ENCODE measurements at regions of chr17 and their contacts with region 1.

Region 1: DNA sequence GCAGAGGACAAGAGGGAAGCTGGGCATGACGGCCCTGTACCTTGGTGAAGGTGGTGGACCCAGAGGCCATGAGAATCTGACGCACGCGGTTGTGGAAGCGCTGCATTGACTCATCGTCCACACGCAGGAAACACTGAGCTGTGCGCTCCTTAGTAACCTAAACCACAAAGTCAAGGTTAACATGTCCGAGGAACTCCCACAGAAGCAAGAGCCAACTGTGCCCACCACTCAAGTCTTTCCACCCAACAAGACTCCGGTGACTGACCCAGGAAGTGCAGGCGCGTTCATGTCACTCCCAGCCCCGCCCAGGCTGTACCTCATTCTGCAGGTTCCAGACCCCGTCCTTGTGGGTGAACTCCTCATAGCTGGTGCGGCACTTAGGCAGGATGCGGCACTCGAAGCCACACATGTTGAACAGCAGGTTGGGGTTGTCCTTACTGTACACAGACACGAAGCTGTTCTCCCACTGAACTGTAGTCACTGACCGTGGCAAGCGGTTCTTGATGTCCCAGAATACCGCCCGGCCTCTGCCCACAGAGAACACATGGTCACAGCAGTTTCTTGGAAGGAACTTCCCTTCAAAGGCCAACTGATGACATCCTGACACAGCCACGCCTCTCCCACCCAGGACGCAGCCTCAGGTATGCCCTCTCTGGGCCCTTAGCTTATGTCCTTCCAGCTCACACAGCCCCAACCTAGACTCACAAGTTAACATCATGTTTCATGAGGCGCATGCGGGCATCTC is 11.5 kb downstream of the PRPF8 start:
- DNase-seq: peak in 1 of 9 donors; percentile 7
- ATAC-seq: peak; percentile 26
- H3K4me3 ChIP-seq: no peak overlapping the region
- H3K4me3 Mint-ChIP-seq: no peak overlapping the region
- H3K27ac ChIP-seq: no peak overlapping the region
- H3K27ac Mint-ChIP-seq: peak overlapping the region in 5 of 9 donors; percentile 6 to 60 (median 43)
- H3K4me1 ChIP-seq: no peaks in the 10 kb centered on the region
- H3K4me1 Mint-ChIP-seq: peaks cover 19 to 45% (median 34%) of the 10 kb centered on the region in 7 donors
- H3K27me3 ChIP-seq: no peaks in the 10 kb centered on the region
- H3K27me3 Mint-ChIP-seq: no peaks in the 10 kb centered on the region

Region 2: GRCh38 chr17:1783834-1784611 is 110.8 kb after region 1 on chr17:
- CTCF ChIA-PET with region 1: interaction called, 3 read pairs
- POLR2A ChIA-PET with region 1: interaction called, 3 read pairs
- intact Hi-C with region 1: loop called (anchors 1 kb)
- DNase-seq: peak in 3 of 9 donors; percentile 27 to 30 (median 28)
- ATAC-seq: peak; percentile 85
- H3K4me3 ChIP-seq: no peak overlapping the region
- H3K4me3 Mint-ChIP-seq: peak overlapping the region in 1 of 10 donors; percentile 59
- H3K27ac ChIP-seq: peak overlapping the region; percentile 14
- H3K27ac Mint-ChIP-seq: peak overlapping the region in 7 of 9 donors; percentile 28 to 82 (median 63)
- H3K4me1 ChIP-seq: no peaks in the 10 kb centered on the region
- H3K4me1 Mint-ChIP-seq: peaks cover 0 to 18% (median 14%) of the 10 kb centered on the region in 7 donors
- H3K27me3 ChIP-seq: no peaks in the 10 kb centered on the region
- H3K27me3 Mint-ChIP-seq: no peaks in the 10 kb centered on the region

Region 3: GRCh38 chr17:1865252-1866037 is 192.2 kb after region 1 on chr17:
- CTCF ChIA-PET with region 1: interaction called, 4 read pairs
- POLR2A ChIA-PET with region 1: no interaction called
- intact Hi-C with region 1: loop called (anchors 1 kb)
- DNase-seq: peak; percentile 19 to 71 (median 61)
- ATAC-seq: peak; percentile 86
- H3K4me3 ChIP-seq: no peak overlapping the region
- H3K4me3 Mint-ChIP-seq: no peak overlapping the region
- H3K27ac ChIP-seq: no peak overlapping the region
- H3K27ac Mint-ChIP-seq: no peak overlapping the region
- H3K4me1 ChIP-seq: peaks cover 5 to 10% of the 10 kb centered on the region in 2 donors
- H3K4me1 Mint-ChIP-seq: peaks cover 8 to 35% (median 23%) of the 10 kb centered on the region in 7 donors
- H3K27me3 ChIP-seq: no peaks in the 10 kb centered on the region
- H3K27me3 Mint-ChIP-seq: no peaks in the 10 kb centered on the region